ENCODE measurements at regions of chr15 and their contacts with region 1.

Region 1: GRCh38 chr15:70679919-70680231 is 83.5 kb downstream of the UACA start:
- DNase-seq: no peak
- H3K4me3 ChIP-seq: no peak overlapping the region
- H3K27ac ChIP-seq: no peak overlapping the region
- H3K4me1 ChIP-seq: no peaks in the 10 kb centered on the region
- H3K27me3 ChIP-seq: no peaks in the 10 kb centered on the region
- CTCF ChIP-seq: peak in 1 of 4 experiments; percentile 15
- POLR2A ChIP-seq: no peak

Region 2: DNA sequence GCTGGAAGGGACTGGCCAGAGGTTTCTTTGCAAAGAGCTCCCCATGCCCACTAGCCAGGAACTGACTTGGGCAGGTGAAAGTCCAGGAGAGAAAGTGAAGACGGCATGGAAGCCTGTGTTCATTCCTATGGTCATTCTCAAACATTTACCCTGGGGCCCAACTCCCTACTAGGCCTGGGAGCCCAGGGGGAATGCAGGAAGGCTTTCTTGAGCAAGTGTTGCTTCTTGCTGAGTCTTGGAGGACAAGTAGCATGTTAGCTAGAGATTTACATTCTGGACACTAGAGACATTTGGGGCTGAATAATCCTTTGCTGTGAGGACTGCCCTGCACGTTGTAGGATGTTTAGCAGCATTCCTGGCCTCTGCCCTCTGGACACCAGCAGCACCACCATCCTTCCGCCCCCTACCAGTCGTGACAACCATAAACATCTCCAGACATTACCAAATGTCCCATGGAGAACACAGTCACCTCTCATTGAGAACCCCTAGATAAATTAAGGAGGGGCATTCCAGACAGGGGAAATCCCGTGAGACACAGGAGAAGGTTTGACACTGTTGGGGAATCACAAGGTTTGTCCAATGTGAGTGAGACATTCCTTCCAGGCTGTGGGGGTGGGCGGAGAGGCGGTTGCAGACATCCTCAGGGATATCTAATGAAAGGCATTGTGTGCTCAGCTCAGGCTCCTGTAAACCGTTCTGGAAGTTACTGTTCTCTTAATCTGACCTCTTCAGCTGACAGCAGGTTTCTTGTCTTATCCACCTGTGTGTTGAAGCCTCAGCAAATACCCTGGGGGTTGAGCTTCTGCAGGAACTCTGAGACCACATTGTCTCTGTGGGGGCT is 818.3 kb before region 1 on chr15:
- intact Hi-C with region 1: no loop called
- DNase-seq: no peak
- H3K4me3 ChIP-seq: no peak overlapping the region
- H3K27ac ChIP-seq: no peak overlapping the region
- H3K4me1 ChIP-seq: no peaks in the 10 kb centered on the region
- H3K27me3 ChIP-seq: peaks cover 2% of the 10 kb centered on the region
- CTCF ChIP-seq: no peak
- POLR2A ChIP-seq: no peak

Region 3: GRCh38 chr15:70259028-70259424 is 420.8 kb before region 1 on chr15:
- intact Hi-C with region 1: no loop called
- DNase-seq: peak; percentile 54
- H3K4me3 ChIP-seq: no peak overlapping the region
- H3K27ac ChIP-seq: no peak overlapping the region
- H3K4me1 ChIP-seq: no peaks in the 10 kb centered on the region
- H3K27me3 ChIP-seq: no peaks in the 10 kb centered on the region
- CTCF ChIP-seq: no peak
- POLR2A ChIP-seq: no peak

Region 4: GRCh38 chr15:70722266-70723121 is 42.6 kb after region 1 on chr15:
- intact Hi-C with region 1: loop called (anchors 1 kb)
- DNase-seq: no peak
- H3K4me3 ChIP-seq: no peak overlapping the region
- H3K27ac ChIP-seq: no peak overlapping the region
- H3K4me1 ChIP-seq: peaks cover 11% of the 10 kb centered on the region
- H3K27me3 ChIP-seq: no peaks in the 10 kb centered on the region
- CTCF ChIP-seq: peak; percentile 61 to 89 (median 78)
- POLR2A ChIP-seq: no peak

Region 5: GRCh38 chr15:70810916-70811578 is 131.2 kb after region 1 on chr15:
- intact Hi-C with region 1: loop called (anchors 2 kb)
- DNase-seq: no peak
- H3K4me3 ChIP-seq: no peak overlapping the region
- H3K27ac ChIP-seq: no peak overlapping the region
- H3K4me1 ChIP-seq: no peaks in the 10 kb centered on the region
- H3K27me3 ChIP-seq: no peaks in the 10 kb centered on the region
- CTCF ChIP-seq: no peak
- POLR2A ChIP-seq: no peak

Region 6: DNA sequence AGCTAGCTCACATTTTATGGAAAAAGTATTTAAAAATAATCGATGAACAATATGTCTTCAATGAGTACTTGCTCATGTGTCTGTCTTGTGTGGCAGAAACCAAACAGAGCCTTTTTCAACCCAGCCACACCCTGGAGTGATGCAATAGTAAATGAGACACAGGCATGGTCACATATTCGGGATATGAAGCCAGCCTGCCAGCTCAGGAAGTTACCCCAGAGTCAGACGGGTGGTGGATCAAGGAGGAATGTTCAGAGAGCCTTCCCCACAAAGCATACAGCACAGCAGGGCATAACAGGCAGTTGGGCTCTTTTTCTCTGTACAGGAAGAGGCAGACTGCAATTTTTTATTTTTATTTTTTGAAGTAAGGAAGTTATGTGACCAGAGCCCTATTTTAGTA is 146.8 kb after region 1 on chr15:
- intact Hi-C with region 1: no loop called
- DNase-seq: no peak
- H3K4me3 ChIP-seq: no peak overlapping the region
- H3K27ac ChIP-seq: no peak overlapping the region
- H3K4me1 ChIP-seq: no peaks in the 10 kb centered on the region
- H3K27me3 ChIP-seq: no peaks in the 10 kb centered on the region
- CTCF ChIP-seq: no peak
- POLR2A ChIP-seq: no peak

Region 7: GRCh38 chr15:71151081-71151480 is 471.2 kb after region 1 on chr15:
- intact Hi-C with region 1: no loop called
- DNase-seq: no peak
- H3K4me3 ChIP-seq: no peak overlapping the region
- H3K27ac ChIP-seq: peak overlapping the region in 1 of 2 donors; percentile 44
- H3K4me1 ChIP-seq: peaks cover 21% of the 10 kb centered on the region
- H3K27me3 ChIP-seq: no peaks in the 10 kb centered on the region
- CTCF ChIP-seq: no peak
- POLR2A ChIP-seq: no peak